ENCODE measurements at regions of chr6 and their contacts with region 1.

Region 1: GRCh38 chr6:36615018-36615761 is 21.0 kb downstream of the SRSF3 start:
- DNase-seq: peak in 9 of 14 experiments; percentile 17 to 82 (median 32)
- ATAC-seq: peak; percentile 85
- H3K4me3 ChIP-seq: no peak overlapping the region
- H3K4me3 Mint-ChIP-seq: no peak overlapping the region
- H3K27ac ChIP-seq: no peak overlapping the region
- H3K27ac Mint-ChIP-seq: peak overlapping the region; percentile 66
- H3K4me1 ChIP-seq: peaks cover 9% of the 10 kb centered on the region
- H3K4me1 Mint-ChIP-seq: peaks cover 21% of the 10 kb centered on the region
- H3K27me3 ChIP-seq: no peaks in the 10 kb centered on the region
- H3K27me3 Mint-ChIP-seq: no peaks in the 10 kb centered on the region
- CTCF ChIP-seq: peak; percentile 74

Region 2: GRCh38 chr6:36594029-36594815 is 21.0 kb before region 1 on chr6 and contains the start of gene SRSF3:
- CTCF ChIA-PET with region 1: interaction called, 16 read pairs
- POLR2A ChIA-PET with region 1: interaction called, 60 read pairs
- intact Hi-C with region 1: no loop called
- DNase-seq: peak; percentile 89 to 99 (median 94)
- ATAC-seq: peak; percentile 87
- H3K4me3 ChIP-seq: peak within 1 kb of the TSS; percentile 95
- H3K4me3 Mint-ChIP-seq: peak within 1 kb of the TSS; percentile 94
- H3K27ac ChIP-seq: peak within 1 kb of the TSS; percentile 97 to 99
- H3K27ac Mint-ChIP-seq: peak within 1 kb of the TSS; percentile 97
- H3K4me1 ChIP-seq: peaks cover 47% of the 10 kb centered on the region
- H3K4me1 Mint-ChIP-seq: peaks cover 54% of the 10 kb centered on the region
- H3K27me3 ChIP-seq: no peaks in the 10 kb centered on the region
- H3K27me3 Mint-ChIP-seq: peaks cover 5% of the 10 kb centered on the region
- CTCF ChIP-seq: peak; percentile 52
- total RNA-seq, gene SRSF3: 550 to 556 TPM

Region 3: DNA sequence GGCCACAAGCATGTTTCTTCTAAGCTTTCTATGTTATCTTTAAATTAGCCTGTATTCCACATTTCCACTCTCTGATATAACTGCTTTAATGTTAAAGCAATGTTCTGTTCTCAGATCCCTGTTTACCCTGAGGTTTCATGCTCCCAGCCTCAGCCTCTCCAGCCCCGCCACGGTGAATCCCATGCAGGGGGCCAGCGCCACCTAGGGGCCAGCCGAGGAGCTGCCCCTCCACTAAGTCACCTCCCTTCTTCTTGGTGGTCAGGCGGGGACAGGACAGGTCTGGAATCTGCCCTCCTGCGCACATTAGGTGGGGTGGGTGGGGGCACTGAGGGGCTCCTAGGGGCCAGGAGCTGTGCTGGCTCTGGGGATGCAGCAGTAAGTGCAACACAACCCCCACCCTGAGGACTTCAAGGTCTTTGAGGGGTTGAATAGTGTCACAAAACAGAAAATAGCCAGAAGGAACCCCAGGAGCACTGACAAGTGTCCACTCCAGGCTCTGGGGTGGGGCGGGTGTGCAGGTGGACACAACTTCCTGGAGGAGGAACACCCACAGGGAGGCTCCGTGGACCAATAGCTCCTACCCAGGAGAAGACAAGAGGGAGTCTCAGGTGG is 144.1 kb after region 1 on chr6:
- CTCF ChIA-PET with region 1: interaction called, 21 read pairs
- POLR2A ChIA-PET with region 1: interaction called, 3 read pairs
- intact Hi-C with region 1: loop called (anchors 2 kb)
- DNase-seq: peak; percentile 58 to 88 (median 76)
- ATAC-seq: peak; percentile 53
- H3K4me3 ChIP-seq: no peak overlapping the region
- H3K4me3 Mint-ChIP-seq: no peak overlapping the region
- H3K27ac ChIP-seq: no peak overlapping the region
- H3K27ac Mint-ChIP-seq: no peak overlapping the region
- H3K4me1 ChIP-seq: peaks cover 49% of the 10 kb centered on the region
- H3K4me1 Mint-ChIP-seq: peaks cover 46% of the 10 kb centered on the region
- H3K27me3 ChIP-seq: no peaks in the 10 kb centered on the region
- H3K27me3 Mint-ChIP-seq: no peaks in the 10 kb centered on the region
- CTCF ChIP-seq: peak; percentile 98

Region 4: DNA sequence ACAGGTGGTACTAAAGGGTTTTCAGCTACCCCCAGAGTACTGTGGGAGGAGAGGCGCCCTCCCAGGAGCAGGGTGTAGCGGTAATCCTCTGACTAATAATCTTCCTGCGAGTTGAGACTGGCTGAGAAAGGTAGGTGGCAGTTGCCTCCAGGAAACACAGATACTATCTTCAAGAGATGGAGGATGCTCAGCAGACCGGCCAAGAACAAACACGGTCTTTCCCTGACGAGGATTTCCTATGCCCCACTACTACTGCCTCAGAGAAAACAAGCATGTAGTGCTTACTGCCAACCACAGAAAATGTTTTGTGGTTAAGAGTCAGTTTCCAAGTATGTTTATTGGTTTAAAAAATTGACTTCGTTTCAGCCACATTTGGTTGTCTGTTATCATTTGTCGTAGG is 297.4 kb after region 1 on chr6:
- CTCF ChIA-PET with region 1: no interaction called
- POLR2A ChIA-PET with region 1: no interaction called
- intact Hi-C with region 1: no loop called
- DNase-seq: peak; percentile 19 to 89 (median 49)
- ATAC-seq: peak; percentile 92
- H3K4me3 ChIP-seq: peak overlapping the region; percentile 23
- H3K4me3 Mint-ChIP-seq: peak overlapping the region; percentile 64
- H3K27ac ChIP-seq: peak overlapping the region; percentile 32 to 50
- H3K27ac Mint-ChIP-seq: peak overlapping the region; percentile 82
- H3K4me1 ChIP-seq: peaks cover 38% of the 10 kb centered on the region
- H3K4me1 Mint-ChIP-seq: peaks cover 36% of the 10 kb centered on the region
- H3K27me3 ChIP-seq: no peaks in the 10 kb centered on the region
- H3K27me3 Mint-ChIP-seq: no peaks in the 10 kb centered on the region
- CTCF ChIP-seq: no peak

Region 5: DNA sequence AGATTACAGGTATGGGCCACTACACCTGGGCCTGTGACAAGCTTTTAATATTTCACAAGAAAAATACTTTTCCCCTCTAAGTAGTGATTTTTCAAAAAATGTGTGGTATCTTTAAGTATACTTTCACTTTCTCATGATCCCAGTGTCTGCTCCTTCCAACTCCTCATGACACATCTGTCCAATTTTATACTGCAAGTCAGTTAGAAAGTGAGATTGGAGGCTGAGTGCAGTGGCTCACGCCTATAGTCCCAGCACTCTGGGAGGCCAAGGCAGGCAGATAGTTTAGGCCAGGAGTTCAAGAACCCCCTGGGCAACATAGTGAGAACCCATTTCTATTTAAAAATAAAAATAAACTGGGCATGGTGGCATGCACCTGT is 575.0 kb after region 1 on chr6:
- CTCF ChIA-PET with region 1: no interaction called
- POLR2A ChIA-PET with region 1: no interaction called
- intact Hi-C with region 1: loop called in 1 of 2 experiments (anchors 10 kb)
- DNase-seq: no peak
- ATAC-seq: no peak
- H3K4me3 ChIP-seq: no peak overlapping the region
- H3K4me3 Mint-ChIP-seq: no peak overlapping the region
- H3K27ac ChIP-seq: no peak overlapping the region
- H3K27ac Mint-ChIP-seq: no peak overlapping the region
- H3K4me1 ChIP-seq: peaks cover 49% of the 10 kb centered on the region
- H3K4me1 Mint-ChIP-seq: peaks cover 59% of the 10 kb centered on the region
- H3K27me3 ChIP-seq: no peaks in the 10 kb centered on the region
- H3K27me3 Mint-ChIP-seq: no peaks in the 10 kb centered on the region
- CTCF ChIP-seq: no peak

Measured in CD4-positive, alpha-beta T cell (primary cell).